ENCODE measurements at regions of chr16 and their contacts with region 1.

Region 1: DNA sequence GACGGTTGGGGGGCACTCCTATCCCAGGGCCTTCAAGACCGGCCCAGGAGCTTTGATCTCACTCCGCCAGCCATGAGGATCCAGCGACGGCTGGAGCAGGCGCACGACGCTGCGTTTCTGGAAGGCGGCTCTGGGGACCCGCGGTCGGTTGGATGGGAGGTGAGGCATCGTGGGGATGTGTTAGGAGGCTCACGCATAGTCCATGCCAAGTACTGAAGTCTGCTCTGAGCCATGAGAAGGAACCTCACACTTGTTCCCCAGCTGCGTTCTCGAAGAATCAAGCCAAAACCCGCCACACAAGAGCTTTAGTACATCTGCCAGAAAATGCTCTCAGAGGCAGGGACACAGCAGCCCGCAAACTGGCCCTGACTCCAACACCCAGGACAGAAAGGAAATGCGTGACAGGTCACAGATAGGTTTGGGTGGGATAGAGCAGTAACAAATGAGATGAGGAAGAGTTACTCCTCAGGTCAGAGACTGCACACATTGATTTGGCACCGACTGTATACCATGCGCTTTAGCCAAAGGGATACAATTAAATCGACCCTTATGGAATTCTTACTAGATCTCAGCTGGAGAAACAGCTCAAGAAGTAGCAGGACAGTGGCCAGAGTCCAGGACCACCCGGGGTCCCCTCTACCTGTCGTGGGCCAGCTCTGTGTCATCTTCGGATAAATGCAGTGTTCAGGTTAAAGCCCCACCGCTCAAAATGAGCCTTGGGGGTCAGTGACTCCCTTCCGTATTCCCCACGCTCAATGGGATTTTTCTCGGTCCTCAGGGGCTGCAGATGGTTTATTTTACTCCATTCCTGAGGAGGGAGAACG is 6.7 kb upstream of the GSG1L start:
- DNase-seq: peak in 1 of 2 donors; percentile 34
- ATAC-seq: no peak
- H3K4me3 ChIP-seq: no peak overlapping the region
- H3K27ac ChIP-seq: no peak overlapping the region
- H3K4me1 ChIP-seq: no peaks in the 10 kb centered on the region
- H3K27me3 ChIP-seq: no peaks in the 10 kb centered on the region

Region 2: DNA sequence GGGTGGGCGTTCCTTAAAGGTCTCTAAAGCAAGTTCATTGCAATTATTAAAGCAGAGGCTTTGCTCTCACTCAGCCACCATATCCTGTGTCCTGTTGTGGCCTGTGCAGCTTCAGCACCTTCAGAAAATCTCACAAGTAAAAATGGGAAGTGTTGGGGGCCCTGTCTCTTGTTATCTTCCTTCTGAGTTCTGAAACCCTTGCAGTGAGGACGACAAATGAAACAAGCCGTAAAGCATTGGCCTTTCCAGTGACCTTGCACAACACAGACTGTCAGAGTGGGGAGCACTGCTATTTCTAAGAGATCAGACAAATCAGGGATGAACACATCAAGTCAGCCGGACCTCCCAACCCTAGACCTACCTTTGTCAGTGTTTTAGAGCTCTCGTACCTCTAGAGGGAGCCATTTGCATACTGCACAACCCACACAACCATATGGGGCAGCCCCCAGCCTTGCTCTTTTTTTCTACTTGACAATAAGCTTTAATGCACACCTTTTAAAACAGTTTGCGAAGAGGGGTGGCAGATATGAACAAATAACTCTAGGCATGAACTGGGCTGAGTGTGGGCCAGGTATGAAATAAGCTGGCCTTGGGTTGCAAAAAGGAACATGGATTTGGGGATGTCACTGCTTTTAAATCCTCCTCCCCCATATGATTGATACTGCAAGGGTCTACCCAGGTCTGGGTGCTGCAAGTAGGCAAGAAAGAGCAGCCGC is 430.5 kb before region 1 on chr16:
- intact Hi-C with region 1: loop called (anchors 5 to 10 kb)
- DNase-seq: no peak
- ATAC-seq: no peak
- H3K4me3 ChIP-seq: no peak overlapping the region
- H3K27ac ChIP-seq: no peak overlapping the region
- H3K4me1 ChIP-seq: no peaks in the 10 kb centered on the region
- H3K27me3 ChIP-seq: no peaks in the 10 kb centered on the region

Region 3: DNA sequence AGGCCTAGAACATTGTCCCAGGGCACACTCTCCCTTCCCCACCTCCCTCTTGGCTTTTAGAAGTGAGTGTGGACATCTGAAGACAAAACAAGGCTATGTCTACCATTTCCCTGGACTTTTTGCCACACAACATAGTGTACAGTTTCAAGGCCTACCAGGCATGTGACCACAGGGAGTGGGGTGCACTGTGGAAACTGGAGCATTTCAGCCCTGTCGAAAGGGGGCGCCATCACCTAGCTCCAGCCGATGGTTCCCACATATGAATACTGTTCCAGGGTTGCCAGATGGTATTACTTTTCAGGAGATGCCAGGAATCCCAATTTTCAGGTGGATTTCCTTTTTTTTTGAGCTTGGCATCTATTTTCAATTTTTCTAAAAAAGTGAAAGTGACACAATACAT is 379.6 kb before region 1 on chr16:
- intact Hi-C with region 1: loop called in 1 of 2 experiments (anchors 5 kb)
- DNase-seq: peak in 1 of 2 donors; percentile 79
- ATAC-seq: no peak
- H3K4me3 ChIP-seq: no peak overlapping the region
- H3K27ac ChIP-seq: no peak overlapping the region
- H3K4me1 ChIP-seq: no peaks in the 10 kb centered on the region
- H3K27me3 ChIP-seq: no peaks in the 10 kb centered on the region

Region 4: DNA sequence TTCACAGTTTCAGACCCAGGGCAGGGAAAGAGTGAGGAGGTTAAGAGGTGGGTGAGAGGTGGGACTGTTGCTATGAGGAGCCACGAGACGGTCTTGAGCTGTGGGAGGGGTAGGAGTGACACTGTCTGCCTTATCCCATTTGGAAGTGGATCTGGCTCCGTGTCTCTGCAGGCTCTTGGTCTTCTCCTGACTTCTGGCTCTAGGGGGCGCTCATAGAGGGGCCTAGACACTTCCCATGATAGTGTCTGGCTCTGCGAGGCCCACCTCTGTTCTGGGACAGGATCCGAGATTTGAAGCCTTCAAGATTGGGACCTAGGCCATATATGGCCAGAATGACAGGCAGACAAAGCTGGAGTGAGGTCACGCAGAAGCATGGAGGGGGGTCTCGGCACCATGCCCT is 211.2 kb before region 1 on chr16:
- intact Hi-C with region 1: loop called in 1 of 2 experiments (anchors 10 kb)
- DNase-seq: no peak
- ATAC-seq: no peak
- H3K4me3 ChIP-seq: no peak overlapping the region
- H3K27ac ChIP-seq: no peak overlapping the region
- H3K4me1 ChIP-seq: no peaks in the 10 kb centered on the region
- H3K27me3 ChIP-seq: no peaks in the 10 kb centered on the region

Region 5: DNA sequence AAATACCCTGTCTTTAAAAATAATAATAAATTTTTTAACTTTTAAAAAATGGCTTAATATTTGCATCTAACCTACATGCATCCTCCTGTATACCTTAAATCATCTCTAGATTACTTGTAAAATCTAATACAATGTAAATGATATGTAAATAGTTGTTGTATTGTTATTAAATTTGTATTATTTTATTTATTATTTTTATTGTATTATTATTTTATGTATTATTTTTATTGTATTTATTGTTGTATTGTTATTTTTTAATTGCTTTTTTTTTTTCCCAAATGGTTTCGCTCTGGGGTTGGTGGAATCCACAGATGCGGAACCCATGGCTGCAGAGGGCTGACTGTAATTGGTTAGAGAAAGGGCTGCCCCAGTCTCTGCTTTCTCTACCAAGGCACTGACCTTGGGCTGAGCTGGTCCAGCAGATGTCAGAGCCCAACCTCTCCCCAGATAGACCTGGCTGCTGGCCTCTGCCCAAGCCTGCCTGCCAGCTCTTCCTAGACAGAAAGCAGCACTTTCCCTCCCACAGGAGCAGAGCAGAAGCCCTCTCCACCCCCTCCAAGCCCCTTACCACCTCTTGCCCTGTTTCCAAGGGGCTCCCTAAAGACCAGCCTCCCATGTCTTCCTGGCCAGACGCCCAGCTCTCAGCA is 190.5 kb before region 1 on chr16:
- intact Hi-C with region 1: no loop called
- DNase-seq: no peak
- ATAC-seq: no peak
- H3K4me3 ChIP-seq: no peak overlapping the region
- H3K27ac ChIP-seq: no peak overlapping the region
- H3K4me1 ChIP-seq: no peaks in the 10 kb centered on the region
- H3K27me3 ChIP-seq: no peaks in the 10 kb centered on the region